Adrenal gland (tissue), 19 donors: ENCODE measurements at regions of chr7 and their contacts with region 1.

Region 1: DNA sequence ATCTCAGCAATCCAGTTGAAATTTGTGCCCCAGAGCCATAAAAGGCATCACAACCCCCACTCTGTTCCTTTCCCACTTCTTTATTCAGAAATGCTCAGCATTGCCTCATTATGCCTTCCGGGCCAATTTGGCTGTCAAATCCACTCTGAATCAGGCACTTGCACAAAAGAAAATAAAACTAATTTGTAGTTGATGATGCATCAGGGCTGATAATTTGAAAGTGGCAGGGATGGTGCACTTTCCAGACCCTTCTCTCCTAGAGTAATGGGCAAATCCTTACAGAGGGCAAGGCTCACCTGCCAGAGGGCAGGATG is 147.9 kb upstream of the PDE1C start:
- DNase-seq: no peak
- H3K4me3 ChIP-seq: no peak overlapping the region
- H3K27ac ChIP-seq: no peak overlapping the region
- H3K4me1 ChIP-seq: no peaks in the 10 kb centered on the region
- H3K27me3 ChIP-seq: no peaks in the 10 kb centered on the region
- CTCF ChIP-seq: no peak
- POLR2A ChIP-seq: no peak

Region 2: DNA sequence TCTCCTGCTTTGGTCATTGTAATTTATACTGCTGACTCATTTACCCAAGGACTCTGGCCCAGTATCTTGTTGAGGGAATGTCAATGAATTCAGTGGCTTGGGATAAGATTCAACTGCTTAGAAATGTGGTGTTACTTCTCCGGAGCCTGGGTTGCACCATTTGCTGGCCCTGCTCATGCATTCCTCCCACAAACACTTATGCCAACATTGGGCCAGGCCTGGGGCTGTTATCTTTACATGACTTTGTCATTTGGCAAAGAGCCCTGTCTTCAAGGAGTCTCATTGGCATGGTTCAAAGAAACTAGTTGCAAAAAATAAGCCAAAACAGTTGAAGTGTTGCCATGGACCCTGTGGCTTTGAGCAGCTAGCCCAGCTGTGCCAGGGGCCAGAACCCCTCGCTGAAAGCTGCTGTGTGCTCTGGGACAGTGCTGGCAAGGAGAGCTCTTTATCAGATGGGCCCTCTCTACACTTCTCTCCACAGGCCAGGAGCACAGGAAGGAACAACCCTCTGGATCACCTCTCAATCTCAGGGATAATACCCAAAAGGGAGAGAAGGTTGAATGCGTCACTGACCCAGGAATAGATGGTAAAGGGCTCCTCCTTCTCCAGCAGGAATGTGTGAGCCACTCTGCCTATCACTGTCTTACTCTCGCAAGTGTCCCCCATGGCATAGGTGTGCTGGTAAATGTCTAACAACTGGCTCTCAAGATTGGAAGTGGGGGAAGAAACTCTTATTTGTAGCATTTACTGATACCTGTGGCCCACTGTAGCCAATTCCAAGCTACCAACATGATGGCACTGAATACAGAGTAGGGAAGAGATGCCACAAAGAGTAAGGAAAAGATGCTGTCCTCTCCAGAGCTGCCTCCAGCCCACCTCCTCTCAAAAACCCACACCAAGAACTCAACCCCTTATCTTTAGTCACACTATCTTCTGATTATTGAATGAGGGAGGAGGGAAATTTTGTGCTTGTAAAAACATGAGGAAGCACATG is 124.4 kb before region 1 on chr7:
- intact Hi-C with region 1: no loop called
- DNase-seq: peak; percentile 23 to 91 (median 84)
- H3K4me3 ChIP-seq: no peak overlapping the region
- H3K27ac ChIP-seq: peak overlapping the region in 2 of 5 donors; percentile 17 to 68
- H3K4me1 ChIP-seq: peaks cover 0 to 11% of the 10 kb centered on the region in 2 donors
- H3K27me3 ChIP-seq: no peaks in the 10 kb centered on the region
- CTCF ChIP-seq: no peak
- POLR2A ChIP-seq: no peak

Region 3: GRCh38 chr7:32347244-32347828 is 129.2 kb after region 1 on chr7:
- intact Hi-C with region 1: loop called in 1 of 2 experiments (anchors 10 kb)
- DNase-seq: peak in 3 of 7 donors; percentile 25 to 62 (median 35)
- H3K4me3 ChIP-seq: no peak overlapping the region
- H3K27ac ChIP-seq: no peak overlapping the region
- H3K4me1 ChIP-seq: no peaks in the 10 kb centered on the region
- H3K27me3 ChIP-seq: no peaks in the 10 kb centered on the region
- CTCF ChIP-seq: peak in 5 of 6 experiments; percentile 38 to 60 (median 56)
- POLR2A ChIP-seq: no peak

Region 4: DNA sequence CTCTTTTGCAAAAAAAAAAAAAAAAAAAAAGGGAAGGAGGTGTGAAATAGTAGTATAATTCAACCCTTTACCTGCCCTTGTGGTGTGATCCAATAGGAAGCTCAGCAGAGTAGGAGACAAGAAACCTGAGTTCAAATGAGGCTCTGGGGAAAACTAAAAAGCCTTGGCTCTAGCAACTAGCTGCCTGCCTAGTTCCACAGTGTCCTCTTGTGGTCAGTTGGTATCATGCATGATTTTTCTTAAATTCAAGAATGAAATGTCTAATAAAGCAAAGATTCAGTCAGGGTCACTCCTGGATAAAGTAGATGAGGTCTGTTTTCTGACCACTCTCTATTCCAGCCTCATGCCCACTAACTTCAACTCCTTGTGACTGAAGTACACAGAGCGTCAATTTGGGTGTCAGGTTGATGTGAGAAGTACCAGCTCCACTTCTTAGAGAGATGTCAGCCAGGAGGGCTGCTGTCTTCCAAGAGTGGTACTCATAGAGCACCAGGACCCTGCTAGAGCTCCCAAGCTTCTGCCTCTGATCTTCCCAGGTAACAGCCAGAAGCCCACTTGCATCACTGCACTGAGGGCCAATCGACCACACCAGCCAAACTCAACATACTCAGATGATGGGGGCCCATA is 261.6 kb after region 1 on chr7:
- intact Hi-C with region 1: loop called (anchors 10 kb)
- DNase-seq: peak in 2 of 7 donors; percentile 31 to 40
- H3K4me3 ChIP-seq: no peak overlapping the region
- H3K27ac ChIP-seq: no peak overlapping the region
- H3K4me1 ChIP-seq: peaks cover 0 to 8% of the 10 kb centered on the region in 2 donors
- H3K27me3 ChIP-seq: no peaks in the 10 kb centered on the region
- CTCF ChIP-seq: peak; percentile 55 to 76 (median 68)
- POLR2A ChIP-seq: no peak